ENCODE measurements at regions of chr1 and their contacts with region 1.

Region 1: DNA sequence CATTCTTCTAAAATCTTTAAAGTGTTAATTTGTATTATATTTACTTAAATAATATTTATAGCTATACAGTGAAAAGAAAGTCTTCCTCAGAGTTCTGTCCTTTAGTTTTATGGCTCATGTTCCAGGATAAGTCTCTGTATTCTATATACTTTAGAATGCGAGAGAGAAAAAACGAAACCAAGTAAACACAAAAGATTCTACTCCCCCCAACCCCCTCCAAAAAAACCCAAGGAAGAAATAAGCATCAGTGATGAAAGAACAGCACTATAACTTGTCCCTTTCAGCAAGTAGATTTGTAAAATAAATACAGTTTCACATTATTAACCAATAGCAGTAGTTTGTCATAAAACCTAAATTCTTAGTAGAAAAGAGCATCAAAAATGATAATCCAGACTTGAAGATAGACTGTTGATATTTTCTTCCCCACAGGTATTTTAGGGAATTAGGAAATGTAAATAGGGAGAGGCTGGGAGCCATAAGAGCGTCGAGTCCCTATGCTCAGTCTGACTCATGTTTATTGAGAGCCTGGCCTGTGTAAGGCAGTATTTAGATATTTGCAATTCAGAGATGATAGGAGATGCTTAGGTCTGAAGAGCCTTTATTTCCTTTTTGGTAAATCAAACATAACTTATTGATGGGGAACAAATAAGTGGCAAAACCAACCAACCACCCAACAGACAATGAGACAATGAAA is 35.5 kb downstream of the CDC14A start:
- DNase-seq: no peak
- H3K4me3 ChIP-seq: no peak overlapping the region
- H3K27ac ChIP-seq: no peak overlapping the region
- H3K4me1 ChIP-seq: no peaks in the 10 kb centered on the region
- H3K27me3 ChIP-seq: no peaks in the 10 kb centered on the region
- CTCF ChIP-seq: no peak

Region 2: GRCh38 chr1:100400404-100400803 is 12.6 kb after region 1 on chr1:
- CTCF ChIA-PET with region 1: no interaction called
- POLR2A ChIA-PET with region 1: no interaction called
- intact Hi-C with region 1: loop called (anchors 1 kb)
- DNase-seq: peak; percentile 78
- H3K4me3 ChIP-seq: no peak overlapping the region
- H3K27ac ChIP-seq: no peak overlapping the region
- H3K4me1 ChIP-seq: peaks cover 13% of the 10 kb centered on the region
- H3K27me3 ChIP-seq: no peaks in the 10 kb centered on the region
- CTCF ChIP-seq: no peak

Region 3: GRCh38 chr1:100622037-100622436 is 234.2 kb after region 1 on chr1:
- CTCF ChIA-PET with region 1: no interaction called
- POLR2A ChIA-PET with region 1: no interaction called
- intact Hi-C with region 1: no loop called
- DNase-seq: peak; percentile 29
- H3K4me3 ChIP-seq: no peak overlapping the region
- H3K27ac ChIP-seq: no peak overlapping the region
- H3K4me1 ChIP-seq: no peaks in the 10 kb centered on the region
- H3K27me3 ChIP-seq: no peaks in the 10 kb centered on the region
- CTCF ChIP-seq: no peak

Region 4: GRCh38 chr1:100699744-100700143 is 311.9 kb after region 1 on chr1:
- CTCF ChIA-PET with region 1: no interaction called
- POLR2A ChIA-PET with region 1: no interaction called
- intact Hi-C with region 1: no loop called
- DNase-seq: no peak
- H3K4me3 ChIP-seq: no peak overlapping the region
- H3K27ac ChIP-seq: no peak overlapping the region
- H3K4me1 ChIP-seq: no peaks in the 10 kb centered on the region
- H3K27me3 ChIP-seq: no peaks in the 10 kb centered on the region
- CTCF ChIP-seq: no peak

Region 5: GRCh38 chr1:101257500-101258325 is 869.9 kb after region 1 on chr1:
- CTCF ChIA-PET with region 1: no interaction called
- POLR2A ChIA-PET with region 1: no interaction called
- intact Hi-C with region 1: no loop called
- DNase-seq: no peak
- H3K4me3 ChIP-seq: no peak overlapping the region
- H3K27ac ChIP-seq: no peak overlapping the region
- H3K4me1 ChIP-seq: no peaks in the 10 kb centered on the region
- H3K27me3 ChIP-seq: no peaks in the 10 kb centered on the region
- CTCF ChIP-seq: no peak